ENCODE measurements at regions of chr12 and their contacts with region 1.

Region 1: DNA sequence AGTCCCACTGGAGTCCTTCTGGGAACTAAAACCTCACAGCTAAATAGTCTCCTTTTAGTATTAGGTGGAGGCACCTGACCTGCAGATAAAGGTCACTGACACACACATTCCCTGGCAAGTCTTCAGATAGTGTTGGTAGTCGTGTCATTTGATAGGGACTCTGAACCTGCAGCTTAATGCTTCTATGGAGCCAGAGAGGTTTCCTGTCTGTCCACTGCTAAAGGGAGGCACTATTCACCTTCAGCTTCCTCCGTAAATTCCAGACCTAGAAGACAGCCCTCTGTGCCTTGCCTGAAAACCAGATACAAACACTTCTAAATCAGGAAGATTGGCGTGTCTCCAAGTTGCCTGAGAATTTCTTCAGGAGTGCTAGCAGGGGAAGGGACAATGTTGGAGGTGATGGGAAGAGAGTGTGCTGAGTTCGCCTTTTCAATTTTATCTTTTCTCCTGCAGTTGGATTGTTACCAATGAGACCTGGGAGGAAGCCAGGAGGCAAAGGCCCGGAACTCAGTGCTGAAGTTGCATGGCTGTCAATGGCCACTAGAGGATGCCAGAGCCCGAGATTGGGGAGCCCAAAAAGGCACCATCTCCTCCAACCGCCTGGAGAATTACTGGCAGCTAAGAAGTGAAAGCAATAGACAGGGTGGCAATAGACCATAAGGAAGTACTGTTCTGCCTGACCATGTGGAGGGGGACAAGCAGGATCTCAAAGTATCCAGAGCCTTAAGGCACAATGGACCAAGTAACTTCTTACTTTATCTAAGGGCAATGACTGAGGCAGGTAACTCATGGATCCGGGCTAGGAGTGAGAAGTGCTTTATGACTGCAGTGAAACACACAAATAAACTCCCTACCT is 81.6 kb upstream of the SCAF11 start:
- DNase-seq: peak; percentile 50 to 68
- ATAC-seq: peak; percentile 90 to 98
- H3K4me3 ChIP-seq: no peak overlapping the region
- H3K27ac ChIP-seq: peak overlapping the region in 1 of 2 experiments; percentile 30; a peak in 1 of 6 replicates
- H3K4me1 ChIP-seq: 0 out of 3 replicates have a peak, but pooled peaks cover 5% of the 10 kb centered on the region
- CTCF ChIP-seq: peak; percentile 94
- EP300 ChIP-seq: no peak
- POLR2A ChIP-seq: no peak
- RAD21 ChIP-seq: peak; percentile 91 to 97

Region 2: GRCh38 chr12:45944771-45945170 is 127.2 kb before region 1 on chr12:
- CTCF ChIA-PET with region 1: no interaction called
- POLR2A ChIA-PET with region 1: no interaction called
- DNase-seq: no peak
- ATAC-seq: no peak
- H3K4me3 ChIP-seq: no peak overlapping the region
- H3K27ac ChIP-seq: no peak overlapping the region
- H3K4me1 ChIP-seq: peaks cover 10% of the 10 kb centered on the region; the same call in 2 of the 3 replicates
- CTCF ChIP-seq: no peak
- EP300 ChIP-seq: no peak
- POLR2A ChIP-seq: no peak
- RAD21 ChIP-seq: no peak

Region 3: DNA sequence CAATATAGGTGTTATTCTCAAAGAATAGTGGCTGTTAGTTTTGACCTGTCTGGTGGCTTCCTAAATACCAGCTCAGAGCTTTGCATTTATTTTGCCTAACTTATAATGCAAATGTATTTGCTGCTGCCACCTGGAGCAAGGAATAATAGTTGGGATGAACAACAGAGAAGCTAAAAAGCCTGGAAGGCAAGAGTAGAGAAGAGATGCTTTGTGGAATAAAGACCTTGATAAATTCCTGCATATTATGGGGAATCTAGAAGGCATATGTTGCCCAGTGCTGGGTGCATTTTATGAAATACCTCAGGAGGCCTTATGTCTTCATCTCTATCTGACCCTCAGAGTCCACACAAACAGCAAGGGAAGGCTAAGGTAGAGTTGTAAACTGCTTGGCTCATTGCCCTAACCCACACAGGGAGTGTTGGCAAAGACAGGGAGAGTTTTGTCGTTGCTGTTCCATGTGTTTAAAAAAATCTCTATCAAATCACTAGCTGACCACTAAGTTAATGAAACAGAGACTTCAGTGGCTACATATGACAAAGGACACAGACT is 28.0 kb before region 1 on chr12:
- CTCF ChIA-PET with region 1: no interaction called
- POLR2A ChIA-PET with region 1: no interaction called
- DNase-seq: no peak
- ATAC-seq: no peak
- H3K4me3 ChIP-seq: no peak overlapping the region
- H3K27ac ChIP-seq: no peak overlapping the region
- H3K4me1 ChIP-seq: no peaks in the 10 kb centered on the region
- CTCF ChIP-seq: no peak
- EP300 ChIP-seq: no peak
- POLR2A ChIP-seq: no peak
- RAD21 ChIP-seq: no peak

Region 4: DNA sequence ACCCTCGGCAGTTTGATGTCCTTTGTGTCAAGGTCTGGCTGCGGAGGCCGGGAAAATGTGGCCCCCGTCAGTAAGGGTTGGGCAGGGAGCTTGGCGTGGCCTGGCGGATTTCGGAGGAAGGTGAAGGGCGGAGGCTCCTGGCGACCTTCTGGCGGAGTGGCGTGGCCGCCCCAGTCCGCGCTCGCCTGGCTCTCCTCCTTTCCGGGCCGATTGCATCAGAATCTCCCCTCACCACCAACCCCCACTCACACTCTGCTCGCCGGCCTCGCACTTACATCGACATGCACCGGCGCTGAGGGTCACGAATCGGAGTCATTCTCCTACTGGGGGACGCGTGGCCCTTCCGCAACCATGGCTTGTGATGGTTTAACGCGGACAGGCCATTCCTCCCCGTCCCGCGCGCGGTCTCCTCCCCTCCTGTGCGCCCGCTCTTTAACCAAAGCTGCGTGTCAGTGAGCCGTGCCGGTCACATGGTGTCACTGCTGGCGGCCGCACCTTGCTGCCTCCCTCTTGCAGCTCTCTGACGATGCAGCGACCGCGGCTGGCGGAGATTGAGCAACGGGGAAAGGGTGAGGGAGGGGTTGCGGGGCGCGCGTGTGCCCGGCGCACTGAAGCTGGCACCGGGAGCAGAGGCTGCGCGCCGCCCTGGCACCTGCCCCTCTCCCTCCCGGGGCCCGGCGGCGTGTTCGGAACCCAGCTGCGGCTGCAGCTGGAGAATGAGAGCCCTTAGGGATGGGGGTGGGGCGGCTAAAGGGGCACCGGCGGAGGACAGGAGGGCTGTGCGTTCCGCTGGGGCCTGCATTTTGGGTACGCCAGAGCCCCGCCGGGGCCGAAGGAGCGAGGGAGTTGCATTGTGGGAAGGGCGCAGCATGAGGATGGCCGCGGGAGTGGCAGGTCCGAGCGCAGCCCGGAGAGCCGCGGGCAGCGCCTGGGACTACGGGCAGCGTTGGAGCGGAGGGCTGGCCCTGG is 196.9 kb after region 1 on chr12 and contains the start of gene SLC38A1:
- CTCF ChIA-PET with region 1: no interaction called
- POLR2A ChIA-PET with region 1: no interaction called
- DNase-seq: peak; percentile 88 to 93
- ATAC-seq: peak; percentile 87 to 89
- H3K4me3 ChIP-seq: peak within 1 kb of the TSS; percentile 66
- H3K27ac ChIP-seq: peak within 1 kb of the TSS; percentile 94 to 95
- H3K4me1 ChIP-seq: peaks cover 36% of the 10 kb centered on the region
- CTCF ChIP-seq: no peak
- EP300 ChIP-seq: no peak
- POLR2A ChIP-seq: peak; percentile 42
- RAD21 ChIP-seq: peak in 1 of 2 experiments; percentile 42; a peak in 1 of 5 replicates
- polyA plus RNA-seq, gene SLC38A1: 183 and 231 TPM in 2 replicates

Region 5: GRCh38 chr12:46983393-46984266 is 911.6 kb after region 1 on chr12:
- CTCF ChIA-PET with region 1: interaction called, 12 read pairs
- POLR2A ChIA-PET with region 1: no interaction called
- DNase-seq: peak; percentile 34 to 76
- ATAC-seq: peak; percentile 85 to 96
- H3K4me3 ChIP-seq: no peak overlapping the region
- H3K27ac ChIP-seq: 0 out of 6 replicates have a peak overlapping the region, but pooled peaks of 1 of the 2 experiments have one; percentile 40
- H3K4me1 ChIP-seq: no peaks in the 10 kb centered on the region
- CTCF ChIP-seq: peak; percentile 80
- EP300 ChIP-seq: no peak
- POLR2A ChIP-seq: no peak
- RAD21 ChIP-seq: peak; percentile 86 to 92

Region 6: DNA sequence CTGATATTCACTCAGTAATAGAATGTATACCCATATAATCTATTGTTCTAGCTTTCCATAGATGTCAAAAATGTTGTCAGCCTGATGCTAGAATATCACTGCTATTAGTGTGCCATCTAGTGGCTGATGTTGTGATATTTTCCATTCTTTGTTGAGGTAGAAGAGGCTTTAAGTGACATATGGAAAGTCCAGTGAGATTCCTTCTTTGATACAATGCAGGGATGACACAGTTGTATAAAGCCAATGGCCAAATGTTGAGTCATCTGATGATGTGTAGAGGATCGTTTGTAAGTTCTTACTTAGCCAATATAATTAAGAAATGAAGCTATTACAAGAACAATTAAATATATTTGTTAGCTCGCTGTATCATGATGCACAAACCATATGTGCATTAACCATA is 949.3 kb after region 1 on chr12:
- CTCF ChIA-PET with region 1: interaction called, 26 read pairs
- POLR2A ChIA-PET with region 1: no interaction called
- DNase-seq: peak; percentile 50 to 88
- ATAC-seq: peak; percentile 72 to 86
- H3K4me3 ChIP-seq: no peak overlapping the region
- H3K27ac ChIP-seq: no peak overlapping the region
- H3K4me1 ChIP-seq: peaks cover 43% of the 10 kb centered on the region
- CTCF ChIP-seq: peak; percentile 93
- EP300 ChIP-seq: no peak
- POLR2A ChIP-seq: no peak
- RAD21 ChIP-seq: peak; percentile 89 to 92